T-cell (primary cell): ENCODE measurements at regions of chr12 and their contacts with region 1.

Region 1: DNA sequence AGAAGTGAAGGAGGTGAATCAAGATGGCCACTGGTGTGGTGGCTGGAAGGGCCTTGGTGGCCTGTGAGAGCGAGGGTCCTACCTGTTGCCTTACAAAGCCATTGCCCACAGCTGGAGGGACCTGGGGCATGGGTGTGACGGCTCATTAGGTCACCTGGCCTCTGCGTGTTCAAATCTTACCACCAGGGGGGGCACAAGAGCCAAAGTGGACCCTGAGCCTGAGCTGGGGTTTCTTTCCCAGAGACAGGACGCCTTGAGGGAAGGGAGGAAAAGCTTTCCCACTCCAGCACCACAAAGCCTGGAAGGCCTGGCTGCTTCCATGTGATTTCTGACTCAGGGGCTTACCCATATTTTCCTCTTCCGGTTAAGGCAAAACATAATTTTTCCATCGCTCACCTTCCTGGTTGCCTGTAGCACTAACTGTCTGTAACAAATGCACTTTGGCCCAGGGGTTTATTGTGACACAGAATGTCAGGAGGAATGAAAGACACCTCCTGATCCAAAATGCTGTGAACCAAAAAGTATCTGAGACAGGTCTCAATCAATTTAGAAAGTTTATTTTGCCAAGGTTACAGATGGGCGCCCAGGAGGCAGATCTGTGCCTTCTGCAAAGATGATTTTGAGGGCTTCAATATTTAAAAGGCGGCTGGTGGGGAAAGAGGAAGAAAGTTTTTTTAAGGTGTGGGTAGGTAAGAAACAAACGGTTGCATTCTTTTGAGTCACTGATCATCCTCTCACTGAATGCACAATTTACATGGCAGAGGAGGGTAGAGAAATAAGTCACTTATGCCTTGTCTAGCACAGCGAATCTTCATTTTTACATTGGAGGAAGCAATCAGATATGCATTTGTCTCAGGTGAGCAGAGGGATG is 4.3 kb upstream of the CD9 start:
- DNase-seq: peak; percentile 22 to 82 (median 62)
- ATAC-seq: peak; percentile 69 to 80 (median 78)
- H3K4me3 ChIP-seq: no peak overlapping the region
- H3K4me3 Mint-ChIP-seq: no peak overlapping the region
- H3K27ac ChIP-seq: no peak overlapping the region
- H3K27ac Mint-ChIP-seq: peak overlapping the region; percentile 45 to 70
- H3K4me1 ChIP-seq: peaks cover 0 to 18% of the 10 kb centered on the region in 2 experiments
- H3K4me1 Mint-ChIP-seq: peaks cover 10 to 11% (median 10%) of the 10 kb centered on the region in 3 donors
- H3K27me3 ChIP-seq: peaks cover 0 to 34% of the 10 kb centered on the region in 2 experiments
- H3K27me3 Mint-ChIP-seq: peaks cover 6 to 30% of the 10 kb centered on the region in 2 donors

Region 2: DNA sequence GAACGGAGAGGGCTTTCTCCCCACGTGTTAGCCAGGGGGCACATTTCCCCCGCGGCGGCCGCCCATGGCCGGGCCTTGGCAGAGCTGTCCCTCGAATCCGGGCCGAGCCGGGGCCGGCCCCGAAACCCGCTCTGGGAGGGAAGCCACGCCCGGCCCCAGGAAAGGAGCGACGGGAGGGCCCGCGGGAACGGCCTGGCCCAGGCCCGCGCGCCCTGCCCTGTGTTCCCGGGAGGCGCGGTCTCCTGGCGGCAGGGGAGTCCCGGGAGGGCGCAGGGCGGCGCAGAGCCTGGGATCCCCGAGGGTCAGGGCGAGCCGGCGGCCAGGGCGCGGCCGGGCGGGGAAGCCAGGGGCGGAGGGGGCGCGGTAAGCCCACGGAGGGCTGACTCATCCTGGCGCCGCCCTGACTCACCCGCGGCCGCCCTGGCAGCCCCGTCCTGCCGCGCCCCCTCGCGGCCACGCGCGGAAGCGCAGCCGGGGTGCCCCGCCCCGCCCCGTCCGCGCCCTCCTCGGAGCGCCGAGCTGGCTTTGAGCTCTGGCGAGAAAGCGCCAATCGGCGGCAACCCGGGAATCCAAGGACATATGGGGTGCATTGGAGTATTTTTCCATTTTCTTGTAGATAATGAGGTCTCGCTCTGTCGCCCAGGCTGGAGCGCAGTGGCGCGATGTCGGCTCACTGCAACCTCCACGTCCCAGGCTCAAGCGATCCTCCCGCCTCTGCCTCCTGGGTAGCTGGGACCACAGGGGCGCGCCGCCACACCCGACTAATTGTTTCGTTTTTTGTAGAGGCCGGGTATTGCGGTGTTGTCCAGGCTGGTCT is 82.7 kb after region 1 on chr12:
- CTCF ChIA-PET with region 1: interaction called, 6 to 23 read pairs
- POLR2A ChIA-PET with region 1: no interaction called
- DNase-seq: peak; percentile 55 to 89 (median 74)
- ATAC-seq: peak; percentile 94 to 99 (median 95)
- H3K4me3 ChIP-seq: peak overlapping the region; percentile 33 to 51
- H3K4me3 Mint-ChIP-seq: peak overlapping the region; percentile 70 to 76 (median 72)
- H3K27ac ChIP-seq: no peak overlapping the region
- H3K27ac Mint-ChIP-seq: peak overlapping the region in 1 of 2 donors; percentile 28
- H3K4me1 ChIP-seq: peaks cover 0 to 11% of the 10 kb centered on the region in 2 experiments
- H3K4me1 Mint-ChIP-seq: peaks cover 0 to 6% (median 4%) of the 10 kb centered on the region in 3 donors
- H3K27me3 ChIP-seq: peaks cover 0 to 57% of the 10 kb centered on the region in 2 experiments
- H3K27me3 Mint-ChIP-seq: peaks cover 11 to 39% of the 10 kb centered on the region in 2 donors